RWPE1 (cell line): ENCODE measurements at regions of chr20 and their contacts with region 1.

Region 1: DNA sequence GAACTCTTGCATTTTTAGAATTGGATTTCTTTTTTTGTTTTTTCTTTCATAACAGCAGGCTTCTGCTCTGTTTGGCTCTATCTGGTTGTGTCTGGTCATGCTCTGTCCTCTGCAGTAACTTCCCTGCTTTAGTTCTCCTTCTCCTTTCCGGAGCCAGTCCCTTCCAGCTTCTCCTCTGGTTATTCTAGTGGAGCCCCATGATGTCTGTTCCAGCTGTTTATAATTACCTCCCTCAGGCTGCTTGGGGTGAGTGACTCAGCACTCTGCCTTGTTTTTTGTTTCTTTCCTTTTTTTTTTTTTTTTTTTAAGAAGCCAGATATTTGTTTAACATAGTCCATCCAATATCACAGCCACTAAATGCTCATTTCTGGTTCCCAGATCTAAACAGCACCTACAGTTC is 409.6 kb downstream of the MAFB start:
- DNase-seq: peak; percentile 90
- H3K27ac ChIP-seq: no peak overlapping the region
- CTCF ChIP-seq: no peak

Region 2: DNA sequence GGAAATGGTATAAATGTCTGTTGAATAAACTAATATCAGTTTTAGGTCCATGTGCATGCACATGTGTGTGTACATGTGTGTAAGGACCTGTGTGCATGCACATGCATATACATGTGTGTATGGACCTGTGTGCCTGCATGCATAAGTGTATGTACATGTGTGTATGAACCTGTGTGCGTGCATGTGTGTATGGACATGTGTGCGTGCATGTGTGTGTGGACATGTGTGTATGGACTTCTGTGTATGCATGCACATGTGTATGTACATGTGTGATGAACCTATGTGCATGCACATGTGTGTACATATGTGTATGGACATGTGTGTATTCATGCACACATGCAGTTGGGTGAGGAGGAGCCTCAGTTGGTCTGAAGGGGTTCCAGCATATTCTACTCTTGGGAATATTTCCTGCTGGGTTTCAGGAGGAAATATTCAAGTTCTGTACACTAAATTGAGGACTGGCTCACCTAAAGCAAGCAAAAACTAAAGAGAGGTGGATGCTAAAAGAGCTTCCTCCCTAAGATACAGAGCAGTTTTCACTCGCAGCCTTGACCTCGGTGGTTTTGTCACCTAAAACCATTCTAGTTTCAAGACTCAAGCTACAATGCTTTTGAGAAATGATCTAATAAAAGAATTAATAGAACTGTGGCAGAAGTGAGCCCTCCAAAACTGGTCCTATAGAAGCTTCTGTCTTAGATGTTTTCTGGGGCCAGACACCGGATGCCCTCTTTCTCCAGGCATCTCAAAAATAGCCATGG is 333.2 kb before region 1 on chr20:
- CTCF ChIA-PET with region 1: no interaction called
- POLR2A ChIA-PET with region 1: no interaction called
- DNase-seq: no peak
- H3K27ac ChIP-seq: no peak overlapping the region
- CTCF ChIP-seq: no peak

Region 3: DNA sequence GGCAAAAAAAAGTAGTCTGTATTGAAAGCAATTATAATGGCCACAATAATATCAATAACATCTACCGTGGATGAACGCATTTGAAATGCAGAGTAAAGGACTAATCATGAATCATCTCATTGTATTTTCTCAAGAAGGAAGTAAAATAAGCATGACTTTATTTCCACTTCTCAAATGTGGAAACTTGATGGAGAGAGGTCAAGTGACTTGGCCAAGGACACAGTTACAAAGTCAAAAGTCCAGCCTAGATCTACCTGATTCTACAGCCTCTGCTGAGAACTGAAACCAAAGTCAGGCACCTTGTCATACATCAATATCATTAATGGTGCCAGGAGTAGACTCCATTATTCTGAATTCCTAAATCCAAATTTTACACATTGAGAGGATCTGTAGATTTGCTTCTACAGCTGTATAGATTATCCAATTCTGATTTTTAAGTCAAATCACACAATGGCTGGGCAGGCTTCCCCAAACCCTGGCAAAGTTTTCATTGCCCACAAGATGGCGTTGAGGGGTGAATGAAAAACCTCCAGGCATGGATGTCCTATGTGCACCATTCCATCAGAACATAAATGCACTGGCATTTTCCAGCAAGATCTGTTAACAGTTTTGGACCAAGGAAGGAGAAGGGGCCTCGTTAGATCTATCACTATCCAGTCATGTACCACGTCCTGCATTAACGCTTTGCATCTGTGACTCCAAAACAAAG is 13.4 kb before region 1 on chr20:
- CTCF ChIA-PET with region 1: interaction called, 14 read pairs
- POLR2A ChIA-PET with region 1: no interaction called
- DNase-seq: peak; percentile 72
- H3K27ac ChIP-seq: no peak overlapping the region
- CTCF ChIP-seq: peak; percentile 85